ENCODE measurements at regions of chr3 and their contacts with region 1.

Region 1: DNA sequence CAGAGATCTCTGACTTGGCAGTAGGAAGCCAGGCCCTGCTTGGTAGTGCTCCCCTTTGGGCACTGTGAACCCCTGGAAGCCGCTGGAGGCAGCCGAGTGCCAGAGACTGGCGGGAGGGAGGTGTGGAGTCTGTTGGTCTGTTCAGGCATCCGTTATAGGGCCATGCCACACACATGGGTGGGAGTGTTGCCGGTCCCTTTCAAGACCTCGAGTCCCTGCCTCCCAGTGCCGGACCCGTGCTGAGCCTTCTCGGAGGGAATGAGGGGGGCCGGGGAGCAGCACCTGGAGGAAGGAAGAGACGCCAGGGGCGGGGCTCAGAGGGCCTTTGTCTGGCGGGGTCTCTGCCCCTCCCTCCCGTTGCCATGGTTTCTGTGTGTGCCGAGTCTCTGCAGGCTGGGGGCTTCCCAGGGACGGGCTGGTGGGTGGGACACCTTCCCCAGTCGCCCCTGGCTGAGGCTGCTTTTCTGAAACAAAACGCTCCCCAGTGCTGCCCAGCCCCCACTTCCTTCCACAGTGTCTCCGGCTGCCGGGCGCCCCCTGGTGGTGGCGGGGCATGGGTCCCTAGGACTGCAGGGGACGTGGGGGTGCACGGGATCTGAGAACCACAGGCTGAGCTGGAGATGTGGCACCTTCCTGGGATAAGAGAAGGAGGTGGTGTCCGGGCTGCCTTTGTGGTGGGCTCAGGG is 10.0 kb downstream of the GNAI2 start:
- DNase-seq: peak; percentile 83

Region 2: GRCh38 chr3:50028336-50028735 is 217.6 kb before region 1 on chr3:
- CTCF ChIA-PET with region 1: no interaction called
- POLR2A ChIA-PET with region 1: no interaction called
- DNase-seq: no peak

Region 3: GRCh38 chr3:50112462-50112861 is 133.5 kb before region 1 on chr3:
- CTCF ChIA-PET with region 1: no interaction called
- POLR2A ChIA-PET with region 1: no interaction called
- DNase-seq: no peak

Region 4: DNA sequence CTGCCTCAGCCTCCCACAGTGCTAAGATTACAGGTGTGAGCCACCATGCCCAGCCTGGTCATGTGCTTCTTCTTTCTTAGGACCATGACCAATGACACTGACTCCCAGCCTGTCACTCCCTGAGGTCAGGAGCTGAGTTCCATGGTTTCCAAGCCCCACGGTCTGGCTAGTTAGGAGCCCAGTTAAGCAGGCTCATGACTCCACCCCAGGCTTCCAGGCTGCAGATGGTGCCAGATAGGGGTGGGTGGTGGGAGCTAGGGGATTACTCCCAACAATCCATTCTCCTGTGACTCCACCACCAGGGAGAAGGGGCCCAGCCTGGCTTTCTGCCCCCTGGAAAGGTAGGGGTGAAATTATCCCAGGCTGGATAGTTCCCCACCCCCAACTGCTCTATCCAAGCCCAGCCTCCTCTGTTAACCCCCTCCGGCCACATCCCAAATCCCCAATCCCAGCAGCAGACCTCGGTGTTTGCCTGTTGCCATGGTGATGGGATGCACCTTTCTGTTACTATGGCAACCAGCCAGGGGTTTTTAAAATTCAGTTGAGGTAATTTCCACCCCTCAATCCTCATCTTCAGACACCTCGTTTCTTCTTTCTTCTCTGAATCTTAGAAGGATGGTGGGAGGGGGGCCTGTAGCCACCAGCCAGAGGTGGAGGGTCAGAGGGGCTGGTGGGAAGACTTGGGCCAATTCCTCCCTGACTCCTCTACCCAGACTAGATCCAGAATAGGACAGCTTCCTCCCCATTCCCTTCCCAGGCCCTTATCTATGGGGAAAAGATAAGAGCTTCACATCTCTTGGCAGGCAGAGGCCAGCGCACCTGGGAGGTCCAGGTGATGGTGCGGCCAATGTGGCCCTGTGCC is 113.3 kb before region 1 on chr3:
- CTCF ChIA-PET with region 1: no interaction called
- POLR2A ChIA-PET with region 1: no interaction called
- DNase-seq: no peak

Region 5: DNA sequence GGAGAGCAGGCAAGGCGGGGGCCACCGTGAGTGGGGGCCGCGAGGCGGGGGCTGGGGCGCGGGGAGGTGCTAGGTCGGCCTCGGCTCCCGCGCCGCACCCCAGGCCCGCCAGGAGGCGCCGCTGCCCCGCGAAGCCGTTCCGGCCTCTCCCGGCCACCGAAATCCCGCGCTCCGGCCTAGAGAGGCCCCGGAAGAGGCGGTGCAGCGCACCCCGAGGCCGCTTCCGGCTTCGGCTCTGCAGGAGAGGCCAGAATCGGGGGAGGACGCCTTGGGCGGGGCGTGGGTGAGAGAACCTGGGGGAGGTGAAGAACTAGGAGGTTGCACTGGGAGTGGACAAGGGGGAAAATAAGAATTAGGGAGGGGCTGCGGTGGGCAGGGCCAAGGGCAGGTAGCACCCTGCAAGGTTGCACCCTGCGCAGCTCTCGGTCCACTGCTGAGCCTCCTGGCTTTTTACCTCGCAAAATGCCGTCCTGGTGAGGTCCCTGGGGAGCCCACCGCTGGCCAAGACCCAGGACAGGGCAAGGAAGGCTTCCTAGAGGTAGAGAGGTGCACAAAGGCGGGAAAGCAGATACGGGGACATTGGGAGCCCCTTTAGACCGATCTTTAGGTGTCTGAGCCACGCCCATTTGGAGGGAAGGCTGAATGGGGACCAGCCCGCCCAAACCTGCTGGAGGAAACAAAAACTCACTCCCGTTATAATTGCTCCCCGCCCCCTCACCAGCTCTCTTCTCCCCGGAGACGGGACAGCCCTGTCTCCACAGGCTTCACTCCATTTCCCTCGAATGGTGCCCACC is 18.4 kb before region 1 on chr3:
- CTCF ChIA-PET with region 1: interaction called, 32 read pairs
- POLR2A ChIA-PET with region 1: interaction called, 18 read pairs
- DNase-seq: peak; percentile 89

Region 6: GRCh38 chr3:50235716-50236496 is 10.1 kb before region 1 on chr3 and contains the start of gene GNAI2:
- CTCF ChIA-PET with region 1: interaction called, 16 read pairs
- POLR2A ChIA-PET with region 1: interaction called, 9 read pairs
- DNase-seq: peak; percentile 98

Region 7: GRCh38 chr3:50260027-50260941 is 14.3 kb after region 1 on chr3:
- CTCF ChIA-PET with region 1: interaction called, 31 read pairs
- POLR2A ChIA-PET with region 1: interaction called, 7 read pairs
- DNase-seq: peak; percentile 96

Region 8: GRCh38 chr3:50358911-50359759 is 113.2 kb after region 1 on chr3 and contains the start of gene TMEM115:
- CTCF ChIA-PET with region 1: no interaction called
- POLR2A ChIA-PET with region 1: no interaction called
- DNase-seq: peak; percentile 97

Measured in HEK293T (cell line).